Dorsolateral prefrontal cortex (tissue), 120 donors: ENCODE measurements at regions of chr4 and their contacts with region 1.

Region 1: GRCh38 chr4:185640811-185641675 is 105.7 kb upstream of the PDLIM3 start:
- DNase-seq: no peak
- H3K4me3 ChIP-seq: no peak overlapping the region
- H3K27ac ChIP-seq: no peak overlapping the region
- H3K27me3 ChIP-seq: peaks cover 0 to 7% (median 0%) of the 10 kb centered on the region in 45 donors
- CTCF ChIP-seq: peak; percentile 26 to 79 (median 60)

Region 2: DNA sequence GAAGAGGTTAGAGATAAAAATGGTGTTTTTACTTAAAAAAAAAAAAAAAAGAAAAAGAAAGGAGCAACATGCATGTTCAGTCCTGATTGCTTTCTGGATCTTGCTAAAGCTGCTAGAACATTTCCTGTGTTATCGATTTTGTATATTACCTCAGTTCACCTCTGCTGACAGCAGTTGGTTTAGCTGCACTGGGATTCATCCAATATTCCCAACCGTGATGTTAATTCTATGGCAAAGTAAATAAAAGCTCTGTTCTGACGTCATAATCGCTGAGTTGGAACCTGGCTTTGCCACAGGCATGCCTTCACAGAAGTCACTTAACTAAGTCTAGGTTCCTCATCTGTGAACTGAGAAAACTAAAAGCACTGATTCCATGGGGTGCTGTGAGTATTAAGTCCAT is 261.6 kb after region 1 on chr4:
- intact Hi-C with region 1: no loop called
- DNase-seq: no peak
- H3K4me3 ChIP-seq: no peak overlapping the region
- H3K27ac ChIP-seq: no peak overlapping the region
- H3K27me3 ChIP-seq: peaks cover 0 to 3% (median 0%) of the 10 kb centered on the region in 45 donors
- CTCF ChIP-seq: no peak

Region 3: DNA sequence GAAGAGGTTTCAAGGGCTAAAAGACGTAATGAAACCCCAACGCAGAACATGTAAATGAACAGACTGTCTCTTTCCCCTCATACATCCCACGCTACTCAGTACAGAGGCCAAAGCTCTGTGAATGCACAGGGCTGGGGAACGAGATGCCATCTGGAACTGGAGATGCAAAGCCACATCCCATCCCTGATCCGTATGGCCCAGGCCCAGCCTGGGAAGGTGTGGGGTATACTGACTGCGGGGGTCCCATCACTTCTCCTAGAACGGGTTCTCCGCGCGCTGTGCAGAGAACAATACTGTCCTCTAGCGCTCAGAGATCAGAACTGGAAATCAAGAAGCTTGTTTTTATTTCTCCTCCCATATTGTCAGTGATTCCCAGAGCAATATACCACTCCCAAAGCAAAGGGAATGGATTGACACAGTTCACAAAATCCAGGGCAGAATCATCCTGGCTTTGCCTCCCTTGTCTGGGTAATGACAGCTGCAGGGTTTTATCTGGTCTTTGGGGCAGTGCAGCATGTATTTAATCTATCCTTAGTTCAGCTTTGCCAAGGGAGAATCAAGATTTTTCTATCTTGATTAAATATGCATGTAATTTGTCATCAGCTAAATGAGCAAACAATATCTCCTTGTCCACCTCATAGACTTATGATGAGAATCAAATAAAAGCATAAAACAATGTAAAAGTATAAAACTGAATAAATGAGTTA is 380.6 kb after region 1 on chr4:
- intact Hi-C with region 1: loop called (anchors 5 kb)
- DNase-seq: peak in 6 of 10 donors; percentile 21 to 70 (median 54)
- H3K4me3 ChIP-seq: peak overlapping the region in 40 of 59 donors; percentile 3 to 54 (median 35)
- H3K27ac ChIP-seq: peak overlapping the region in 46 of 59 donors; percentile 1 to 78 (median 50)
- H3K27me3 ChIP-seq: no peaks in the 10 kb centered on the region
- CTCF ChIP-seq: peak; percentile 30 to 87 (median 72)

Region 4: GRCh38 chr4:186037692-186038658 is 396.9 kb after region 1 on chr4:
- intact Hi-C with region 1: loop called (anchors 2 to 5 kb)
- DNase-seq: peak in 2 of 10 donors; percentile 45 to 62
- H3K4me3 ChIP-seq: peak overlapping the region in 5 of 59 donors; percentile 1 to 30 (median 11)
- H3K27ac ChIP-seq: peak overlapping the region in 40 of 59 donors; percentile 4 to 80 (median 56)
- H3K27me3 ChIP-seq: no peaks in the 10 kb centered on the region
- CTCF ChIP-seq: peak; percentile 48 to 98 (median 90)